Activated CD4-positive, alpha-beta memory T cell treated with anti-CD3 and anti-CD28 coated beads for 36 hours (primary cell): ENCODE measurements at regions of chr12 and their contacts with region 1.

Region 1: GRCh38 chr12:107093417-107094182 is at the start of gene CRY1:
- DNase-seq: peak; percentile 95
- H3K4me3 Mint-ChIP-seq: no peak within 1 kb of the TSS
- H3K27ac Mint-ChIP-seq: no peak within 1 kb of the TSS
- H3K4me1 Mint-ChIP-seq: peaks cover 10% of the 10 kb centered on the region
- H3K27me3 Mint-ChIP-seq: peaks cover 8% of the 10 kb centered on the region
- total RNA-seq, gene CRY1: 23.5 to 24.1 TPM

Region 2: DNA sequence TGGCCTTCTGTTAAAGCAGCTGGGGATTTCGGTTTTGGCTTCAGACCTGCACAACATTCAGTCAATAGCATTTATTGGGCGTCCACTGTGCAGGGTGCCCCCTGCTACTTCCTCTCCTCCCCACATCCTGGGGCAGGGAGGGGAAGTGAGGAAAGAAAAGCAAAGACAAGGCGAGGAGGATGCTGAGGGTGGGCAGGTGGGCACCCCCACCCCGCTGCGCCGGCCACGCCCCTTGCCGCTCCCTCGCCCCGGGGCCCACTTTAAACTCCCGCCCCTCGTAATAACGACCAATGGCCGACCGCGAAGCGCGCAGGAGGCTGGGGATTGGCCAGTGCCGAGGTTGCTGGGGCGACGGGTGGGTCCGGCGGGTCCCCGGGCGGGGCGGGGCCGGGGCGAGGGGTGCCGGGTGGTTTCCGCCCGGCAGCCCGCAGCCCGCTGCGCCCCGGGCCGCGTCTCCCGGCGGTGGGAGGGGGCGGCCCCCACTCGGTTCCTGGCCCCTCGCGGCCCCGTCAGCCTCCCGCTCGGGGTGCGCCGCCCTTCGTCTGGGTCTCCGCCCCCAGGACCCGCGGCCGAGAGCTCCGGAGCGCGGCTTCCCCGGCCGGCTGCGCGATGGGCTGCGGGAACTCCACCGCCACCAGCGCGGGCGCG is 1763.2 kb before region 1 on chr12 and contains the start of gene C12orf75:
- CTCF ChIA-PET with region 1: no interaction called
- POLR2A ChIA-PET with region 1: no interaction called
- intact Hi-C with region 1: loop called (anchors 10 kb)
- DNase-seq: peak; percentile 93
- H3K4me3 Mint-ChIP-seq: peak within 1 kb of the TSS; percentile 74
- H3K27ac Mint-ChIP-seq: peak within 1 kb of the TSS; percentile 74
- H3K4me1 Mint-ChIP-seq: peaks cover 39% of the 10 kb centered on the region
- H3K27me3 Mint-ChIP-seq: no peaks in the 10 kb centered on the region
- total RNA-seq, gene C12orf75: 73.7 to 79.7 TPM

Region 3: DNA sequence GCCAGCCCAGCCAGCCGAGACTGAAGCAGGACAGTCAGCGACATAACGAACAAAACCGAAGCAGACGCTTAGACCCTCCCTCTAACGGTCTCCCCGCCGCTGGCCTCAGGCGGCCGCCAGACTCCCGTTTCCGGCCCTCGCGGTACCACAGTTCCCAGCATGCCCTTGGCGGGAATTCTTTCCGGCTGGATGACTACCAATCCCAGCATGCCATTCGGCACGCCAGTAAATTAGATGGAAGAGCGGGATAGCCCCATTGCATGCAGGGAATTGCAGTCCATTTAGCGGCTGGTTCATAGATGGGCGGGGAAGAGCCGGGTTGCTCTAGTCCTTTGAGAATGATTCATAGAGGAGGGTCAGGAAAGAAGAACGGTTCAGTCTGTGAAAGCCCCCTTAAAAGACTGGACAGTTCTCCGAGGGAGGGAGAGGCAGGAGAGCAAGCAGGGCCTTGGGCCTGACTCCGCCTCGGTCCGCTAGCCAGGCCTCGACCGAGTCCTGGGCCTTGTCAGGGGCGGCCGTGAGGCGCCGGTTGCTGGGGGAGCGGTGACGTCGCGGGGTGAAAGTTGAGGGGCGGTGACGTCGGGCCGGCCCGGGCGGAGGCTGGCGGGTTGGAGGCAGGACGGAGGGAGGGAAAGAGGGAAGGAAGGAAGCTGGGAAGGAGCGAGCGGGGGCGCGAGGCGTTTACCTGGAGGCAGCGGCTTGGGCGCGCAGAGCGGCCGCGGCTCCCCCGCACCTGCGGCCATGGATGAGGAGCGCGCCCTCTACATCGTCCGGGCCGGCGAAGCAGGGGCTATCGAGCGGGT is 319.4 kb before region 1 on chr12 and contains the start of gene RIC8B:
- CTCF ChIA-PET with region 1: no interaction called
- POLR2A ChIA-PET with region 1: interaction called, 3 read pairs
- intact Hi-C with region 1: loop called (anchors 5 kb)
- DNase-seq: peak; percentile 91
- H3K4me3 Mint-ChIP-seq: peak within 1 kb of the TSS; percentile 93
- H3K27ac Mint-ChIP-seq: peak within 1 kb of the TSS; percentile 98
- H3K4me1 Mint-ChIP-seq: peaks cover 22% of the 10 kb centered on the region
- H3K27me3 Mint-ChIP-seq: no peaks in the 10 kb centered on the region
- total RNA-seq, gene RIC8B: 9.7 to 9.9 TPM

Region 4: DNA sequence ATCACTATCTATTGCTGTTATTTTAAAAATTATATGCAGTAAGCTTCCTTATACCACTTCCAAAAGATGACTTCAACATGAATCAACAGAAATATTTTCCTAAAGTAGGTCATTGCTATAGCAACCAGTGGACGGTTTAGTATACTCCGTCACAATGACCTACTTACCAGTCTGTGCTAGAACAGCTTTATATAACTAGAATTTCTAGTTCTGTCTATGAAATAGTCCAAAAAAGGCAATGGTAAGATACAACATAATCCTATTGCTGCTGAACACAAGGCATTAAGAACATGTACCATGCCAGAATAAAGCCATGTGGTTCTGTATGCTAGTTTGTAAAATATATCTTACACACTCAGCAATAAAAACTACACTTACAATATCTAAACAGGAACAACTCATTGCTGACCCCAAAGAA is 66.0 kb before region 1 on chr12:
- CTCF ChIA-PET with region 1: interaction called, 4 read pairs
- POLR2A ChIA-PET with region 1: no interaction called
- intact Hi-C with region 1: loop called (anchors 1 kb)
- DNase-seq: no peak
- H3K4me3 Mint-ChIP-seq: peak overlapping the region; percentile 3
- H3K27ac Mint-ChIP-seq: peak overlapping the region; percentile 89
- H3K4me1 Mint-ChIP-seq: peaks cover 67% of the 10 kb centered on the region
- H3K27me3 Mint-ChIP-seq: no peaks in the 10 kb centered on the region

Region 5: DNA sequence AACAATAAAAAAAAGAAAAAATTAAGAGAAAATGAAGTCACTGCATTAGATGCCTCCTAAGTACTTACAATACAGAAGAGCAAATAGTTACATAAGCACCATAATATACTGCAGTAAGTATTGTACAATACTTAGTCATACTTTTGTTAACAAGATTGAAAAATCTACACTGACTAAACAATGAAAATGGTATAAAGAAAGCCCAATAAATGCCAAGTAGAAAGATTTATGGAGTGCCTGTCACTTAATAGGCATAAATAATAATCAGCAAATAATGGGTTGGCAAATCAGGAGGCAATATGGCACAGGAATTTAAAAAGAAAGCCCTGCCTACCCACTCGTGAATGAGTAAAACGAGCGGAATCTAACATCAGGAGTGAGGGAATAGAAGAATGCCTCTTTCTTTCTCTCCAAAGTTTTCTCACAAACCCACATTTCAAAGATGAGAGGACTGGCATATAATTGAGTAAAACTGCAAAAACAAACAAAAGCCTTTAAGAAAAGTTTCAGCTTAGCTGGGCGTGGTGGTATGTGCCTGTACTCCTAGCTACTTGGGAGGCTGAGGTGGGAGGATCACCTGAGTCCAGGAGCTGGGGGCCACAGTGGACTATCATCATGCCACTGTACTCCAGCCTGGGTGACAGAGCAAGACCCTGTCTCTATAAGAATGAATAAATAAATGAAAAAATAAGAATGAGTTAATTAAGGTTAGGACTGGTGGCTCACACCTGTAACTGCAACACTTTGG is 36.4 kb before region 1 on chr12:
- CTCF ChIA-PET with region 1: no interaction called
- POLR2A ChIA-PET with region 1: no interaction called
- intact Hi-C with region 1: no loop called
- DNase-seq: no peak
- H3K4me3 Mint-ChIP-seq: no peak overlapping the region
- H3K27ac Mint-ChIP-seq: no peak overlapping the region
- H3K4me1 Mint-ChIP-seq: peaks cover 7% of the 10 kb centered on the region
- H3K27me3 Mint-ChIP-seq: no peaks in the 10 kb centered on the region

Region 6: GRCh38 chr12:107236824-107237511 is 143.4 kb after region 1 on chr12:
- CTCF ChIA-PET with region 1: no interaction called
- POLR2A ChIA-PET with region 1: no interaction called
- intact Hi-C with region 1: no loop called
- DNase-seq: no peak
- H3K4me3 Mint-ChIP-seq: no peak overlapping the region
- H3K27ac Mint-ChIP-seq: no peak overlapping the region
- H3K4me1 Mint-ChIP-seq: peaks cover 7% of the 10 kb centered on the region
- H3K27me3 Mint-ChIP-seq: peaks cover 7% of the 10 kb centered on the region

Region 7: GRCh38 chr12:107287436-107288413 is 194.1 kb after region 1 on chr12:
- CTCF ChIA-PET with region 1: no interaction called
- POLR2A ChIA-PET with region 1: no interaction called
- intact Hi-C with region 1: loop called (anchors 5 kb)
- DNase-seq: peak; percentile 75
- H3K4me3 Mint-ChIP-seq: no peak overlapping the region
- H3K27ac Mint-ChIP-seq: peak overlapping the region; percentile 54
- H3K4me1 Mint-ChIP-seq: peaks cover 16% of the 10 kb centered on the region
- H3K27me3 Mint-ChIP-seq: no peaks in the 10 kb centered on the region

Region 8: DNA sequence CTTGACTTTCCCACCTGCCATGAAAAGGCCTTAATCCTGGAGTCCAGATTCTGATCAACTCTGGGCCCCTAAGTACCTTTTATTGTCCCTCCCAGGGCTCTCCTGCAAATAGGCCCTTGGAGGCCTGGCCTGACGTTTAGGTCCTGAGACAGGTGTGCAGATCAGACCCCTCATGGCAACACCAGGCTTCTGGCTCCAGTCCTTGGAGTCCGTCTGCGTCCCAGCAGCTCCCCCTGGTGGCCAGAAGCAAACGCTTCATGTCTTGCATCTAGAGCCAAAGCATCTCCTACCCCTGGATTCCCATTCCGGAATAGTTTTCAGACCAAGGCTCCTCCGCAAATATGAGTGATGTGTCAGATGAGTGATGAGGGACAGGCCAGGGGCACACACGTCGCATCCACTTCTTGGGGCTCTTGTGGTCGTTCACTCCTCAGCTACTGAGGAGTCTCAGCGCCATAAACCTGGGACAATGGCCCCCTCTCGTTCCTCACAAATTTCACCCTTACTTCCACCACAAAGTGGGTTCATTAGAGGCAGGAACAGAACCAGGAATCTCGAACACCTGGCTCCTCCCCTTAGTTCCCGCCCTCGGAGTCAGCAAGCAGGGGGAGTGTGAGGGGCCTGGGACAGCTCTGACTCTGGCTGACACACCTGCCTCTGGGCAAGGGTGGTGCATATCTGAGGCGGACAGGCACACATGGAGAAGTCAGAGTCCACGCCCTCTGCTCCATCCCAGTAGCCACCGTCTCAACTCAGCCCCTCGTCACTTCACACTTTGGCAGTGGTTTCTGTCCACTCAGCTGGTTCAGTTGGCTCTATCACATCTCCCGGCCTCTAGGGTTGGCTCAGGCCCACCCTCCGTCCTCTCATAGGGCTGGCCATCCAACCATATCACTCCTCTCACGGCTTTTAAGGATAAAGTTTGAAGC is 514.1 kb after region 1 on chr12:
- CTCF ChIA-PET with region 1: interaction called, 5 read pairs
- POLR2A ChIA-PET with region 1: no interaction called
- intact Hi-C with region 1: loop called (anchors 1 kb)
- DNase-seq: peak; percentile 84
- H3K4me3 Mint-ChIP-seq: no peak overlapping the region
- H3K27ac Mint-ChIP-seq: no peak overlapping the region
- H3K4me1 Mint-ChIP-seq: no peaks in the 10 kb centered on the region
- H3K27me3 Mint-ChIP-seq: no peaks in the 10 kb centered on the region